Calu3 (cell line): ENCODE measurements at regions of chr22 and their contacts with region 1.

Region 1: DNA sequence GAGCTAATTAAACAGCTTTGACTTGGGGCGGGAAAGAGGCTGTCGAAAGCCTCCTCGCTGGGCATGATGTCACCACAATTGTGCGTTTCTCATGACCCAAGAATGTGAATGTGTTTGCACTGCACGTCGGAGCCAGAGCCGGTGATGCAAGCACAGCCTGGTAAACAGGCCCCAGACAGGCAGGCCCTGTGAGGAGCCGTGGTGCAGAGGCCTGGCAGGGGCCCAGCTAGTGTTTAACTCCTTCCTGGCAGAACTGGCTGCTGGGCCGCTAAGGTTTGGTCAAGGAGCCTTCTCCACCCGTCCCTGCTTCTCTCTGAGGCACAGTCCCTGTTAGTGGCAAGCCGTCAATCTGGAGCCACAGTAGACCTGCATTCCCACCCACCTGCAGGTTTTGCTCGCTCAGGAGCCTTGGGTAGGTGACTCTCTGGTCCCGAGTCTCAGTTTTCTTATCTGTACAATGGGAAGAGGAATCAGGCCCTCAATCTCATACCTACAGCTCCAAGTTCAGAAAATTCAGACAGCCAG is 25.4 kb upstream of the SMTN start:
- DNase-seq: peak; percentile 91
- H3K4me3 Mint-ChIP-seq: no peak overlapping the region
- H3K27ac Mint-ChIP-seq: peak overlapping the region; percentile 69
- H3K4me1 Mint-ChIP-seq: peaks cover 12% of the 10 kb centered on the region
- H3K27me3 Mint-ChIP-seq: no peaks in the 10 kb centered on the region
- CTCF ChIP-seq: no peak

Region 2: DNA sequence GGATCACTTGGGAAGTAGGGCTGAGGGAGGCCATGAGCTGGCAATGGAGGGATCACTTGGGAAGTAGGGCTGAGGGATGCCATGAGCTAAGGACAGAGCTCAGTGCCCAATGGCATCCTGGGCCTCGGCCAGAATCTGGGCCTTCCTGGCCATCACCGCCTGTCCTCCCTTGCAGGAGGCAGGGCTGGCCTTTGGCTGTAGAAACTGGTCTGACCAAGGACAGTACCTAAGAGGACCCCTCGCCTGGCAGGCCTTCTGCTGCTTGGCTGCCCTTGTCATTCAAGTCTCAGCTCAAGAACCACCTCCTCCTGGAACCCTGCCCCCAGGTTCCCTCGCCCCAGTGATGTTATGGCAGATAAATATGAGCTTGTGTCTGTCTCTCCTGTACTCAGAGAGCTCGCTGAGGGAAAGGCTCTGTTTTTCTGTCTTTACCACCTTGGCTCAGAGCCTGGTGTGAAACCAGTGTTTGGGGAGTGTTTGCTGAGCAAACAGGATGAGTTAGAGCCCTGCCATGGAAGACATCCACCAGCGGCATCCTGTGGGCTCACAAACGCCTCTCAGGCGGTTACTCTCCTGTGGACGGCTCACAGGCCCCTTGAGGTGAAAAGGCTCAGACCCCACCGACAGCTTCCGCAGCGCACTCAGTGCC is 1720.9 kb before region 1 on chr22:
- CTCF ChIA-PET with region 1: interaction called, 10 read pairs
- intact Hi-C with region 1: no loop called
- DNase-seq: no peak
- H3K4me3 Mint-ChIP-seq: no peak overlapping the region
- H3K27ac Mint-ChIP-seq: no peak overlapping the region
- H3K4me1 Mint-ChIP-seq: no peaks in the 10 kb centered on the region
- H3K27me3 Mint-ChIP-seq: no peaks in the 10 kb centered on the region
- CTCF ChIP-seq: no peak

Region 3: DNA sequence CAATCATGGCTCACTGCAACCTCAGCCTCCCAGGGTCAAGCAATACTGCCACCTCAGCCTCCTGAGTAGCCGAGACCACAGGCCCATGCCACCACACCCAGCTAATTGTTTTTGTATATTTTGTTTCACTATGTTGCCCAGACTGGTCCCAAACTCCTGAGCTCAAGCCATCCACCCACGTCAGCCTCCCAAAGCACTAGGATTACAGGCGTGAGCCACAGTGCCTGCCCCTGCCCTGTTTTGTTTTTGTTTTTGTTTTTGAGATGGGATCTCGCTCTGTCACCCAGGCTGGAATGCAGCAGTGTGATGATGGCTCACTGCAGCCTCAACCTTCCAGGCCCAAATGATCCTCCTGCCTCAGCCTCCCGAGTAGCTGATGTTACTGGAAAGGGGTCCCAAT is 33.2 kb before region 1 on chr22:
- CTCF ChIA-PET with region 1: no interaction called
- intact Hi-C with region 1: no loop called
- DNase-seq: no peak
- H3K4me3 Mint-ChIP-seq: no peak overlapping the region
- H3K27ac Mint-ChIP-seq: no peak overlapping the region
- H3K4me1 Mint-ChIP-seq: no peaks in the 10 kb centered on the region
- H3K27me3 Mint-ChIP-seq: no peaks in the 10 kb centered on the region
- CTCF ChIP-seq: no peak

Region 4: DNA sequence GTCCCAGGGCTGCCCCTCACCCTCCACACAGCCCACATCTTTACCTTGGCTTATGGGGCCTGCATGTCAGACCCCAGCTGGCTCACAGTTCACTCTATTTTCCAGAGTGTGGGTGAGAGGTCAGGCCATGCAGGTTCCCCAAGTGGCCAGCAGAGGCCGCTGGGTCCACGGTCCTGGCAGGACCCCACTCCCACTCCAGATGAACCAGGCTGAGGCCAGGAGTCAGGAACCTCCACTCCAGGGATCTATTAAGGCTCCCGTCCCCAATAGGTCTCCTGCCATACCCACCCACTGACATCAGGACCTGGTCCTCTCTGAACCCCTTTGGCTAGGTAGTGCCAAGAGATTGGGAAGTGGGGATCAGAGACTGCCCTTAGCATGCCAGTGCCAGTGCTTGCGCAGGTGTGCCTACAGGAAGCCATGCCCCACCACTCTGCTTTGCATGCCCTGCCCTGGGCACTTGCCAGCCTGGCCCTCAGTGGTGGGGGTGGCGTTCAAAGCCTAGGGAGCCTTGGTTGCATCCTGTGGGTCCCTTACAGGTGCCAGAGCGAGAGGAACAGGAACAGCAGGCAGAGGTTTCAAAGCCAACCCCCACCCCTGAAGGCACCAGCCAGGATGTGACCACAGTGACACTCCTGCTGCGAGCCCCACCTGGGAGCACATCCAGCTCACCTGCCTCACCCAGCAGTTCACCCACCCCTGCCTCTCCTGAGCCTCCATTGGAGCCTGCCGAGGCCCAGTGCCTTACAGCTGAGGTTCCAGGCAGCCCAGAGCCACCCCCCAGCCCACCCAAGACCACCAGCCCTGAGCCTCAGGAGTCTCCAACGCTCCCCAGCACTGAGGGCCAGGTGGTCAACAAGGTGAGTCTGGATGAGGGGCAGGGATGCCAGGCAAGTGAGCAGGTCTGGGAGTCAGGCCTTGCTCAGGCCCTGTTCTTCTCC is 33.7 kb after region 1 on chr22:
- CTCF ChIA-PET with region 1: no interaction called
- intact Hi-C with region 1: no loop called
- DNase-seq: peak; percentile 52
- H3K4me3 Mint-ChIP-seq: no peak overlapping the region
- H3K27ac Mint-ChIP-seq: no peak overlapping the region
- H3K4me1 Mint-ChIP-seq: no peaks in the 10 kb centered on the region
- H3K27me3 Mint-ChIP-seq: no peaks in the 10 kb centered on the region
- CTCF ChIP-seq: peak; percentile 76

Region 5: GRCh38 chr22:31122532-31123291 is 67.0 kb after region 1 on chr22 and contains the start of gene INPP5J:
- CTCF ChIA-PET with region 1: no interaction called
- intact Hi-C with region 1: no loop called
- DNase-seq: peak; percentile 70
- H3K4me3 Mint-ChIP-seq: peak within 1 kb of the TSS; percentile 73
- H3K27ac Mint-ChIP-seq: no peak within 1 kb of the TSS
- H3K4me1 Mint-ChIP-seq: peaks cover 9% of the 10 kb centered on the region
- H3K27me3 Mint-ChIP-seq: peaks cover 32% of the 10 kb centered on the region
- CTCF ChIP-seq: no peak
- total RNA-seq, gene INPP5J: 4.1 and 4.2 TPM in 2 replicates